HepG2 (cell line): ENCODE measurements at regions of chr2 and their contacts with region 1.

Region 1: DNA sequence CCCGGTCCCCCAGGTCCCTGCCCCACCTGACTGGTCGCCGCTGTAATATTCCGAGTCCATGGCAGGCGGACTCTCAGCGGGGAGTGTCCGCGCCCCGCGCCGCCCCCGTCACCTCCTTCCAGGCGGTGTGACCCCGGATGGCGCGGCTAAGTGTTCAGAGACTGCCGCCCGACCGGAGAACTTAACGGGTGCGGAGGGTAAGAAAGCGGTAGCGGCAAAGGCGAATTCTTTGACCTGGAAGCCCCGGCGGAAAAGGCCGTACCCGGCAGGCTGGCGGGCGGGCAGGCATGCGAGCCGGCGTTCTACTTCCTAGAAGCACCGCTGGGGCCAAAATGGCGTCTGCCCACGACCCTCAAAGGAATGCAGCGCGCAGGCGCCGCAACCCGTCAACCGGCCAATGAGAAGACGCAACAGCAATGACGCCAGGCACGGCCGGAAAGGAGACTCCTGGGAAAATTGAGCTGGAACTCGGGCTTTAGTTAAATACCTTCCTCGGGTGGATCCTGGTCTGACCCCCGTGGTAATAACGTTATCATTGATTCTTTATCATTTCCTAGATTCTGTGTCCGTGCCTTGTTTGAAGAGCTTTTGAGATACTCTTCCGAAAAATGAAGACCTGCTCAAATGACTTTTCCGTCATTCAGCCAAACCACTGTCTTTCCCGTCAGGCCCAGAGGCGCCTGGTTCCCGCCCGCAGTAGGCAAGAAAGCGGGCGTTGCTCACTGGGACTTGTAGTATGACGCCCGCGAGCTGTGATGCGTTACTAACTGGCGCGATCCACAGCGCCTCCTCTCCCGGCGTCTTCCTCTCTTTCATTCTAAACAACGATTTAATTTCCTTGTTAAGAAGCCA is at the start of gene IWS1:
- DNase-seq: peak; percentile 97
- ATAC-seq: peak; percentile 89
- H3K4me3 ChIP-seq: peak within 1 kb of the TSS; percentile 91 to 93 (median 92)
- H3K27ac ChIP-seq: peak within 1 kb of the TSS; percentile 91
- H3K4me1 ChIP-seq: peaks cover 41% of the 10 kb centered on the region
- H3K27me3 ChIP-seq: no peaks in the 10 kb centered on the region; a peak in 1 of 5 replicates
- CTCF ChIP-seq: peak; percentile 63
- EP300 ChIP-seq: 0 out of 4 replicates have a peak, but pooled peaks of 1 of the 2 experiments have one; percentile 8
- POLR2A ChIP-seq: peak; percentile 70 to 95
- RAD21 ChIP-seq: peak; percentile 28
- total RNA-seq, gene IWS1: 62.3 and 90.2 TPM in 2 replicates

Region 2: GRCh38 chr2:126534478-126534877 is 991.9 kb before region 1 on chr2:
- CTCF ChIA-PET with region 1: no interaction called
- POLR2A ChIA-PET with region 1: no interaction called
- in situ Hi-C with region 1: no loop called
- intact Hi-C with region 1: no loop called
- DNase-seq: no peak
- ATAC-seq: no peak
- H3K4me3 ChIP-seq: no peak overlapping the region
- H3K27ac ChIP-seq: no peak overlapping the region
- H3K4me1 ChIP-seq: no peaks in the 10 kb centered on the region
- H3K27me3 ChIP-seq: no peaks in the 10 kb centered on the region
- CTCF ChIP-seq: no peak
- EP300 ChIP-seq: no peak
- POLR2A ChIP-seq: no peak
- RAD21 ChIP-seq: no peak

Region 3: DNA sequence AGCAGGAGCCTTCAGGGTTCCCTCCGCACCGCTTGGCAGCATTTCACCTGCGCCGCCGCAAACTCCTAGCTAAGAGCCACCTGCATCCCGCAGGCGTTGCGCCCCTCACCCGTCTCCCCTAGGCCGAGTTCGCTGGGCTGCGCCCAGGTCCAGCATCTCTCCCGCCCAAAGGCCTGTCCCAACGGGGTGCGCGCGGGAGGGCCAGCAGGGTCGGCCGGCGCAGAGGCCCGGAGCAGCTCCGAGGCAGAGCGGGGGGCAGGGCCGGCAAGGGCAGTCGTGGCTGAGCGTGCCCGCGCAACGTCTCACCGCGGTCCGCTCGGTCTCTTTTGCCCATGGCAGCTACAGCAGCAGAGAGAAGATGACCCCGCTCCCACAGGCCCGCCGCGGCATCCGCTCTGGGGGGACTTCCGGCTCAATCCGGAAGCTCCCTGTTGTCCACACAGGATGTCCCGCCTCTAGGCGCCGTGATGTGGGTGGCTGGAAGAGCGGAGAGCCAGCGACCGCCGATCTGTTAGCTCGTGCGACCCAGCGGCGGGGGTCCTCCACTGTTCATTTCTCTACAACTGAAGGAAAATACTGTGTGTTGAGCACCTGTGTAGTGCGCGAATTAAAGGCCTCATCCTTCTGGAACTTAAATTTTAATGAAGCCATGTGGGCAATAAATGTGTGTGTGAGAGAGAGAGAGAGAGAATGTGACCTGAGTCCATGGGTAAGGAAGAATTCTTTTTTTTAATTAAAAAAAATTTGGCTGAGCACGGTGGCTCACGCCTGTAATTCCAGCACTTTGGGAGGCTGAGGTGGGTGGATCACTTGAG is 232.4 kb before region 1 on chr2 and contains the start of gene ERCC3:
- CTCF ChIA-PET with region 1: no interaction called
- POLR2A ChIA-PET with region 1: interaction called, 10 read pairs
- in situ Hi-C with region 1: no loop called
- intact Hi-C with region 1: no loop called
- DNase-seq: peak; percentile 89
- ATAC-seq: peak; percentile 99
- H3K4me3 ChIP-seq: peak within 1 kb of the TSS; percentile 82 to 97 (median 88)
- H3K27ac ChIP-seq: peak within 1 kb of the TSS; percentile 69
- H3K4me1 ChIP-seq: peaks cover 22% of the 10 kb centered on the region
- H3K27me3 ChIP-seq: no peaks in the 10 kb centered on the region; a peak in 1 of 5 replicates
- CTCF ChIP-seq: no peak
- EP300 ChIP-seq: no peak
- POLR2A ChIP-seq: peak; percentile 92 to 97
- RAD21 ChIP-seq: peak; percentile 73
- total RNA-seq, gene ERCC3: 43.3 and 49.7 TPM in 2 replicates

Region 4: GRCh38 chr2:127508631-127509034 is 17.7 kb before region 1 on chr2:
- CTCF ChIA-PET with region 1: no interaction called
- POLR2A ChIA-PET with region 1: interaction called, 41 read pairs
- in situ Hi-C with region 1: no loop called
- intact Hi-C with region 1: loop called (anchors 2 kb)
- DNase-seq: peak; percentile 44
- ATAC-seq: peak; percentile 38; the same call in 2 of the 3 replicates
- H3K4me3 ChIP-seq: no peak overlapping the region
- H3K27ac ChIP-seq: peak overlapping the region; percentile 3
- H3K4me1 ChIP-seq: peaks cover 49% of the 10 kb centered on the region
- H3K27me3 ChIP-seq: no peaks in the 10 kb centered on the region
- CTCF ChIP-seq: no peak
- EP300 ChIP-seq: no peak
- POLR2A ChIP-seq: no peak
- RAD21 ChIP-seq: no peak

Region 5: GRCh38 chr2:127516031-127516762 is 10.2 kb before region 1 on chr2:
- CTCF ChIA-PET with region 1: no interaction called
- POLR2A ChIA-PET with region 1: interaction called, 41 read pairs
- in situ Hi-C with region 1: no loop called
- intact Hi-C with region 1: loop called (anchors 2 kb)
- DNase-seq: no peak
- ATAC-seq: no peak
- H3K4me3 ChIP-seq: no peak overlapping the region
- H3K27ac ChIP-seq: no peak overlapping the region
- H3K4me1 ChIP-seq: peaks cover 28% of the 10 kb centered on the region
- H3K27me3 ChIP-seq: no peaks in the 10 kb centered on the region
- CTCF ChIP-seq: no peak
- EP300 ChIP-seq: no peak
- POLR2A ChIP-seq: no peak
- RAD21 ChIP-seq: no peak

Region 6: GRCh38 chr2:127649684-127650040 is 123.3 kb after region 1 on chr2:
- CTCF ChIA-PET with region 1: no interaction called
- POLR2A ChIA-PET with region 1: interaction called, 5 read pairs
- in situ Hi-C with region 1: no loop called
- intact Hi-C with region 1: loop called (anchors 10 kb)
- DNase-seq: peak; percentile 86
- ATAC-seq: peak; percentile 70
- H3K4me3 ChIP-seq: 0 out of 6 replicates have a peak overlapping the region, but pooled peaks of 1 of the 3 experiments have one; percentile 10
- H3K27ac ChIP-seq: no peak overlapping the region
- H3K4me1 ChIP-seq: peaks cover 62% of the 10 kb centered on the region
- H3K27me3 ChIP-seq: peaks cover 10 to 72% of the 10 kb centered on the region in 2 experiments
- CTCF ChIP-seq: peak; percentile 91
- EP300 ChIP-seq: no peak
- POLR2A ChIP-seq: no peak
- RAD21 ChIP-seq: peak; percentile 80